Ascending aorta (tissue), 2 donors: ENCODE measurements at regions of chr20 and their contacts with region 1.

Region 1: DNA sequence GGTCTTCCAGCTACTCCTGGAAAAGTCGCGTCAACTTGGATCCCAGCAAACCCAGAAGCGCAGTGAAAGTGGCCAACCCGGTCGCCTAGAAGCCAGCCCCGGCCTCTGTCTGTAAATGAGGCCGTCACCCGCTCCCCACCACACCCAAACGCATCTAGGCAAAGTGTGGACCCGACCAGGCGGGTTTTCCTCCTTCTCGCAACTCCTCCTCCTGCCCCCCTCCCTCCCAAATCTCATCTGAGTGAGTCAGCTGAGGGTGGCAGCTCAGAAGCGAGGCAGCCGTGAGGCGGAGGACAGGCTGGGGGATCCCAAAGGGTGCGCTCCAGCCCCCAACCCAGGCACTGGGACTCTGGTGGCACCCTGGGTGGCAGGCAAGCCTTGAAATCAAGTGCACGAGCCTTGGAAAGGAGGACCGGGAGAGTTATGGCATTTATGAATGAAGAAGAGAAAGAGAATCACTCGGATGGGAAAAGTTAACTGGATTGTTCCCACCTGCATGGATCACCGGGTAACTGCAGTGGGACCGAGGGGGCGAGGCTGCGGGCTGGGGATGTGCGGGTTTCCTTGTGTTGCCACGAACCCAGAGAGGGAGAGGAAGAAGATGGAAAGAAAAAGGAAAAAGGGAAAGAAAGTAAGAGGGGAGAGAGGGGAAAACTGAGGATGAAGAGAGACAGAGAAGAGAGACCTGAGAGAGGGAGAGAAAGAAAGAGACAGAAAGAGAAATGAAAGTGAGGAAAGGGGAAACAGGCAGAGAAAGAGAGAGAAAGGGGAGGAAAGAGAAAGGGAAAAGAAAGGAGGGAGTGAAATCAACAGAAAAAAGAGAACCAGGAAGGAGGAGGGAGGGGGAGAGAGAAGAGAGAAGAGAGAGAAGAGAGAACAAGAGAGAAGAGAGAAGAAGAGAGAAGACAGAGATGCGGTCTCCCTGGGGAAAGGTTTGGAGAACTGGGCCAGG is at the start of gene APCDD1L:
- DNase-seq: peak in 1 of 2 donors; percentile 76
- H3K4me3 ChIP-seq: peak within 1 kb of the TSS; percentile 41 to 63
- H3K27ac ChIP-seq: peak within 1 kb of the TSS; percentile 2 to 48
- H3K4me1 ChIP-seq: peaks cover 7 to 15% of the 10 kb centered on the region in 2 donors
- H3K27me3 ChIP-seq: no peaks in the 10 kb centered on the region
- CTCF ChIP-seq: no peak
- total RNA-seq, gene APCDD1L: 2.1 TPM

Region 2: DNA sequence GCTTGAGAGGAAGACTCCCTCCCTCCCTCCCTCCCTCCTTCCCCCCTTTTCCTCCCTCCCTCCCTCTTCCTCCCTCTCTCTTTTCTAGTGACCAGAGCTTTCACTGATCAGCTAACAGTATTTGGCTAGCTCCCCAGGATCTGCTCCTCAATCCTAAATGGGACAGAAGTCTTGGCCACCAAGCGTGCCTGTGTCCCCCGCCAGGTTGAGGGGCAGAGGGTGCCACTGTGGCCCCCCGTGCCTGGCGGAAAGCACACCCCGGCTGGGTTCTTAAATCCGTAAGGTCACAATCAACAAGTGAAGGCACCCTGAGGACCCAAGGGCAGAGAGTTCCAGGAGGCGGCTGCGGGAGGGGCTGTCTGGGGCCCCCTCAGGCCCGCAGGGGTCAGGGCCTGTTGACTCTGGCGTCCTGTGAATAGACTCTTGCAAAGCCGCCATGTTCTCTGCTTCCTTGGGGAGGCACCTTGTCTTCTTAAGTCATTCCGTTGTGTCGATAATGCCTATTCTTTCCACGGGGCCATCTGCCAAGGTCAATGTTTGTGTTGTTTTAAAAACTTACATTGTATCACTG is 96.7 kb after region 1 on chr20:
- intact Hi-C with region 1: loop called (anchors 5 kb)
- DNase-seq: no peak
- H3K4me3 ChIP-seq: peak overlapping the region in 1 of 2 donors; percentile 13
- H3K27ac ChIP-seq: peak overlapping the region; percentile 87 to 89
- H3K4me1 ChIP-seq: peaks cover 6 to 19% of the 10 kb centered on the region in 2 donors
- H3K27me3 ChIP-seq: no peaks in the 10 kb centered on the region
- CTCF ChIP-seq: no peak